ENCODE measurements at regions of chr20 and their contacts with region 1.

Region 1: DNA sequence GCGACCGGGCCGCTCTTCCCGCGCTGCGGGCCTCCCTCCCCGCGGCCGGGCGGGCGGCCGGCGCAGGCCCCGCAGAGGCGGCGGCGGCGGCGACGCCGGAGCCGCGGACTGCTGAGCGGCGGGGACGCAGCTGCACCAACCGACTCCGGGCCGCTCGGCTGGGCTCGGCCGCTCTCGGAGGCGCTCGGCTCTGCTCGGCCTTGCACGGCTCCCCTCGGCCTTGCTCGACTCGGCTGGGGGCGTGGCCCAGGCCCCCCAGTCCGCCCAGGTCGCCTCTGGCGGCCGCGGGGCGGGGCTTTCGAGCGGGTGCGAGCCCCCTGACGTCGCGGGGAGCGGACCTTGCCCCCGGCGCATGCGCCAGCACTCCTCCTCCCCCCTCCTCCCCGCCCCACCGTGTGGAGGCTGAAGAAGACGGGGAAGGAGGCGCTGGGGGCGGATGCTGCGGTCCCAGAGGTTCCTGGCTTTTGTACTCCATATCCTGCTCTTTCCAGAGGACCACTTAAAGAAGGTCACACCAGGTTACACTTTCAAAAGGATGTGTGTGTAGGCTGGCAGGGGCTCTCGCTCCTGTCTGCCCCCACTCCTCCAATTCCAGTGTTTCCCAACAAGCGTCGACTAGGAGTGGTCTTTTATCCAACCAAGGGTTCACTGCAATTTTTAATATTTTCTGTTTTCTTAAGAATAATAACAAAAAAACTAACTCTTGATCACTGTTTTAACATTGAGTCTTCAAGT is at the start of gene ZHX3:
- DNase-seq: peak; percentile 85 to 98
- H3K4me3 ChIP-seq: peak within 1 kb of the TSS; percentile 94
- H3K27ac ChIP-seq: peak within 1 kb of the TSS; percentile 87 to 90
- H3K4me1 ChIP-seq: peaks cover 0 to 22% of the 10 kb centered on the region in 2 donors
- H3K27me3 ChIP-seq: no peaks in the 10 kb centered on the region
- CTCF ChIP-seq: no peak
- total RNA-seq, gene ZHX3: 53.3 TPM

Region 2: GRCh38 chr20:40251284-40251932 is 1066.3 kb before region 1 on chr20:
- intact Hi-C with region 1: no loop called
- DNase-seq: no peak
- H3K4me3 ChIP-seq: no peak overlapping the region
- H3K27ac ChIP-seq: no peak overlapping the region
- H3K4me1 ChIP-seq: no peaks in the 10 kb centered on the region
- H3K27me3 ChIP-seq: no peaks in the 10 kb centered on the region
- CTCF ChIP-seq: peak in 1 of 3 experiments; percentile 48

Region 3: DNA sequence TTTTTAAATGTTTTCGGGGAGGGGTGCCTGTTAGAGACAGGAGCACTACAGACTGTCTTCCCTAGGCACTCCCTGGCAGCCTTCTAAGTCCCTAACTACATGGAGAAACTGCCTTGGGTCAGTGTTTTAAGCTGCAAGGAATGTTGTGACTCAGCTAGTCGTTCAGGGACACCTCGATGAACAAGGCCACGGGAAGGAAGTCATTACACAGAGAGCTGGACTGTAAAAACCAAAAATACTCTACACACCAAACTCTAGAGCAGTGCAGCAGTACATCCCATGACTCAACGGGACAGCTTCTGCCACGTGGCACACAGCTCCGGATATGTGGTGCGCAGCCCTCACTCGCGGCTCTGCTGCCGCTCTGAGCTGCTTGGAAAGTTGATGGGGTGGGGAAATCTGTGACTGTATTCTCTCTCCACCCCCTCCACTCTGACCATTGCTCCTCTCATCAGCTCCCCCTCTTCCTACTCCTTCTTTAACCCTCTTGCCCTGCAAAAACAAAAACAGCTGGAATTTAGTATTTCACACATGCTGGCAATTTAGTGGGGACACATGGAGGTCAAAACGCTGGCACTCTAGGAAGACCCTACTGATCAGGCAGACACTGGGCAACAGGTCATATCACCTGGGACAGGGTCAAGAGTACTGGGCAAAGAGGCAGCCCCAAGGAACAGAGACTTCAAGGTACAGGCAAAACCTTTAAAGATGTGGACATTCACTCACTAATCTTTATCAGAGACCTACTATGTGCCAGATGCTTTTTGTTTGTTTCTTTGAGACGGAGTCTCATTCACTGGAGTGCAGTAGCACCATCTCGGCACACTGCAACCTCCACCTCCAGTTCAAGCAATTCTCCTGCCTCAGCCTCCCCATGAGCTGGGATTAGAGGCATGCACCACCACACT is 12.0 kb after region 1 on chr20:
- intact Hi-C with region 1: loop called (anchors 1 kb)
- DNase-seq: peak; percentile 80 to 96
- H3K4me3 ChIP-seq: peak overlapping the region in 1 of 2 donors; percentile 44
- H3K27ac ChIP-seq: peak overlapping the region; percentile 89 to 95
- H3K4me1 ChIP-seq: peaks cover 9 to 14% of the 10 kb centered on the region in 2 donors
- H3K27me3 ChIP-seq: no peaks in the 10 kb centered on the region
- CTCF ChIP-seq: no peak

Region 4: DNA sequence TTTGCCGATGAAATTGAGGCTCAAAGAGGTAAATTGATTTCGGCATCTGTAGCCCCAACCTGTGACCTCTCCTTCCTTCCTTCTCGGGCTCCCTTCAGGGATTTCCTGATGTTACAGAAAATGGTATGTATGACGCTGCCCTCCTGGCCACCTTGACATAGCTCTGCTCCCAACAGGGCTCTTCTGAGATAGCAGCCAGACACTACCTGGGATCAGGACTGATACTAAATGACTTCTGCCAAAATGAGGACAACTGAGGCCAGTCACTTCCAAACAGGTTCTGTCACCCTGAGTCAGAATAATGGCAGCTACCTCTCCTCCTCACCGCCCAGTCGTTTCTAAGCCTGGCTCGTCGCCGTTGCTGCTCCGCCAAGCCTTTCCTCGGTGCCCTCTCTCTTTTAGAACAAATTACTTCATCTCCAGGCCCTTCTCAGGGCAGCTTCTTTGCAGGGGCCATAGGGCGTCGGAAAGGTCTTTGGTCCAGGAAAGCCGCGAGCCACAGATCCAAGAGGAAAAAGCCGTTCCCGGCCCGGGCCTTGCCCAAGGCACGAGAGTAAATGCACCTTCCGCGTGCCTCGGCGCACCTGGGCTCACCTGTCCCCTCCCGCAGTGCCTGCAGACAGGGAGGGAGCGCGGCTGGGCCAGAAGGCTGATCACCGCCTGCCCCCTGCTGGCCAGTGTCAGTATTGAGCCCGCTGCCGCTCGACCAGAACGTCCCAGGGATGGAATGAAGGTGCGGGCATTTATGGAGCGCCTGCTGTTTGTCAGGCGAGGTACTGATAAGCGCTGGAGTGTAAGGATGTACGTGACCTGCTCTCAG is 22.0 kb after region 1 on chr20:
- intact Hi-C with region 1: loop called (anchors 1 kb)
- DNase-seq: peak in 1 of 2 donors; percentile 91
- H3K4me3 ChIP-seq: peak overlapping the region; percentile 48 to 55
- H3K27ac ChIP-seq: peak overlapping the region; percentile 81 to 82
- H3K4me1 ChIP-seq: peaks cover 4 to 9% of the 10 kb centered on the region in 2 donors
- H3K27me3 ChIP-seq: no peaks in the 10 kb centered on the region
- CTCF ChIP-seq: peak; percentile 98 to 99 (median 99)

Region 5: GRCh38 chr20:42366626-42367025 is 1048.9 kb after region 1 on chr20:
- intact Hi-C with region 1: no loop called
- DNase-seq: no peak
- H3K4me3 ChIP-seq: no peak overlapping the region
- H3K27ac ChIP-seq: no peak overlapping the region
- H3K4me1 ChIP-seq: no peaks in the 10 kb centered on the region
- H3K27me3 ChIP-seq: no peaks in the 10 kb centered on the region
- CTCF ChIP-seq: no peak

Region 6: DNA sequence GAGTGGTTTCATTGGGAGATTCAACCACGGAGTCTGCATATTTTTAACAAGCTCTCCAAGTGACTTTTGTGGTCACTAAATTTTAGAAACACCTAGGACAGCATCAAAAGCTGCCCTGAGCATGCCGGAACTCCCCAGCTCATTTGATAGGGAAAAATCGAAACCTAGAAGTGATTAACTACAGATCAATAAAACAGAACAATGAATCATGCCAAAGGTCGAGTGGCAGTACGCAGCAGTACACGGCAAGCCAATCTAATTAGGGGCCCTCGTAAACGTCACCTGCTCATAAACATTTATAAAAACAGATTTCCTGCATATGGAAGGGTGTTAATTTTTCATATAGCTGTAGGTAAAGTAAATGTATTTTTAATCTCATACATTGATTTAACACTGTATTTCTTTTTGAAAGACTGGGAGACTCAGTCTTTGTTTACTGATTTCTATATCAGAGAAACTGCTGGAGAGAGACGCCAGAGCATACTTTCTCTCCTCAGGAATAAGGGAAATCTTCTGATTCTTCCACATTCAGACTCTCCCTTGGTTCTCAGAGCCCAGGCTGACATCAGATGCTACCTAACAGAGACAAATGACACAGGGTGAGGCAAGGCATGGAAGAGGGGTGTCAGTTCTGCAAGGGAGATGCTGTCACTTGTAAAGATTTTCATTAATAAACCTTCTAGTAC is 1639.5 kb after region 1 on chr20:
- intact Hi-C with region 1: no loop called
- DNase-seq: no peak
- H3K4me3 ChIP-seq: no peak overlapping the region
- H3K27ac ChIP-seq: no peak overlapping the region
- H3K4me1 ChIP-seq: no peaks in the 10 kb centered on the region
- H3K27me3 ChIP-seq: no peaks in the 10 kb centered on the region
- CTCF ChIP-seq: no peak